ENCODE measurements at regions of chr7 and their contacts with region 1.

Region 1: DNA sequence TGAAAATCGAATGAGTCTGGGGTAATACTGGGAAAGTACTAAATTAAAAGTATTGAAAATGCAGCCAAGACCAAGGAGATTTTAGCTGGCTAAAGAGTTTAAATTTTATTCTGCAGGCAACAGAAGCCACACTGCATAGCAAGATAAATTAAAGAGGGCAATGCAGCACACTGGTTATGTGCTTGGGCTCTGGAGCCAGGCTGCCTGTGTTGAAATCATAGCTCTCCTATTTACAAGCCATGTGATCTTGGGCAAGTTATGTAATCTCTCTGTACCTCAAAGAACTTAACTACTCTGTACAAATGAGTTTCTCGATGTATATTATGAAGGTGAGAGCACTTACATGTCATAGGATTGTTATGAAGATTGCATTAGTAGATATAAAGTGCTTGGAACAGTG is 9.9 kb downstream of the SLC25A13 start:
- DNase-seq: peak in 4 of 5 donors; percentile 13 to 65 (median 44)
- ATAC-seq: peak; percentile 83 to 93 (median 90)
- H3K4me3 ChIP-seq: no peak overlapping the region
- H3K27ac ChIP-seq: peak overlapping the region in 10 of 12 donors; percentile 7 to 51 (median 34)
- H3K4me1 ChIP-seq: peaks cover 0 to 75% (median 45%) of the 10 kb centered on the region in 12 donors
- H3K27me3 ChIP-seq: no peaks in the 10 kb centered on the region
- CTCF ChIP-seq: no peak
- POLR2A ChIP-seq: no peak

Region 2: GRCh38 chr7:96236198-96237039 is 75.5 kb before region 1 on chr7:
- intact Hi-C with region 1: loop called in 1 of 10 experiments (anchors 5 kb)
- DNase-seq: peak in 4 of 5 donors; percentile 61 to 79 (median 72)
- ATAC-seq: peak; percentile 85 to 93 (median 89)
- H3K4me3 ChIP-seq: no peak overlapping the region
- H3K27ac ChIP-seq: peak overlapping the region in 11 of 12 donors; percentile 31 to 80 (median 58)
- H3K4me1 ChIP-seq: peaks cover 0 to 47% (median 27%) of the 10 kb centered on the region in 12 donors
- H3K27me3 ChIP-seq: no peaks in the 10 kb centered on the region
- CTCF ChIP-seq: no peak
- POLR2A ChIP-seq: no peak

Region 3: GRCh38 chr7:96526492-96526891 is 214.5 kb after region 1 on chr7:
- intact Hi-C with region 1: no loop called
- DNase-seq: no peak
- ATAC-seq: no peak
- H3K4me3 ChIP-seq: no peak overlapping the region
- H3K27ac ChIP-seq: no peak overlapping the region
- H3K4me1 ChIP-seq: no peaks in the 10 kb centered on the region
- H3K27me3 ChIP-seq: peaks cover 0 to 4% (median 0%) of the 10 kb centered on the region in 9 donors
- CTCF ChIP-seq: no peak
- POLR2A ChIP-seq: no peak

Region 4: GRCh38 chr7:96691702-96692101 is 379.7 kb after region 1 on chr7:
- intact Hi-C with region 1: loop called in 1 of 10 experiments (anchors 10 kb)
- DNase-seq: no peak
- ATAC-seq: no peak
- H3K4me3 ChIP-seq: no peak overlapping the region
- H3K27ac ChIP-seq: no peak overlapping the region
- H3K4me1 ChIP-seq: peaks cover 0 to 49% (median 31%) of the 10 kb centered on the region in 12 donors
- H3K27me3 ChIP-seq: no peaks in the 10 kb centered on the region
- CTCF ChIP-seq: no peak
- POLR2A ChIP-seq: no peak